Psoas muscle (tissue), 8 donors: ENCODE measurements at regions of chr2 and their contacts with region 1.

Region 1: GRCh38 chr2:196284144-196284844 is 112.9 kb upstream of the STK17B start:
- DNase-seq: no peak
- ATAC-seq: no peak
- H3K4me3 ChIP-seq: no peak overlapping the region
- H3K27ac ChIP-seq: no peak overlapping the region
- H3K4me1 ChIP-seq: peaks cover 7% of the 10 kb centered on the region
- H3K27me3 ChIP-seq: no peaks in the 10 kb centered on the region
- CTCF ChIP-seq: no peak

Region 2: DNA sequence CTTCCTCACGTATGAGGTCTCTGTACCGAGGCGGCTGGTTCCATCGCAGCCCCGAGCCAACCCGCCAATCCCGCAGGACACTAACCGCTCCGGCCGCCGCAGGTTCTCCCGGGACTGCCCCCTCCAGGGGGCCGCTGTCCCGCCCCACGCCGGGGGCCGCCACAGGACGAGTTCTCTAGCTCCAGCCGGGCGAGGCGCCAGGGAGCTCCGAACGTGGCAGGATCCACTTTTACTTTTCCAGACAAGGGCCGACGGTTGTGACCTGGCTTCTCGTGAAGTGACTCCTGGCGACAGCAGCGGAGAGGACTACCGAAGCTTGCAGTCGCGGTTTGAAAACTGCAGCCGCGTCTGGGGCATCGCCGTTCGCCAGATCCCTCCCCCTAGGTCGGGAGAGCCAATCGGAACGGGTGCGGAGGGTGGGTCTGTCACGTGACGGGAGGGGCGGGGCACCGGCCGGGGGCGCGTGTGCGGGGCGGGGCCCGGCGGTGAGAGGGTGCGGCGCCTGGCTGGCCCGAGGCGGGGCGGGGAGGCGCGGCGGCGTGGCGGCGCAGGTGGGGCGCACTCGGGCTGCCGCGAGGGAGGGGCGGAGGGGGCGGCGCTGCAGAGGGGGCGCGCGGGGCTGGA is 112.9 kb before region 1 on chr2 and contains the start of gene STK17B:
- intact Hi-C with region 1: loop called in 1 of 2 experiments (anchors 5 kb)
- DNase-seq: peak; percentile 95 to 97
- ATAC-seq: peak; percentile 97 to 99 (median 98)
- H3K4me3 ChIP-seq: peak within 1 kb of the TSS; percentile 93
- H3K27ac ChIP-seq: peak within 1 kb of the TSS; percentile 84
- H3K4me1 ChIP-seq: peaks cover 7% of the 10 kb centered on the region
- H3K27me3 ChIP-seq: no peaks in the 10 kb centered on the region
- CTCF ChIP-seq: no peak
- total RNA-seq, gene STK17B: 2.9 to 5.3 (median 4.5) TPM